Activated T-helper 2 cell treated with anti-CD3 and anti-CD28 coated beads, Interferon-gamma antibody, Interleukin-2, Interleukin-4, amounts not matched to agents 10 μg/mL and 5 μg/mL and 100 μg/mL, durations not matched to agents 14 hours and 24 hours and 36 hours (primary cell): ENCODE measurements at regions of chr2 and their contacts with region 1.

Region 1: DNA sequence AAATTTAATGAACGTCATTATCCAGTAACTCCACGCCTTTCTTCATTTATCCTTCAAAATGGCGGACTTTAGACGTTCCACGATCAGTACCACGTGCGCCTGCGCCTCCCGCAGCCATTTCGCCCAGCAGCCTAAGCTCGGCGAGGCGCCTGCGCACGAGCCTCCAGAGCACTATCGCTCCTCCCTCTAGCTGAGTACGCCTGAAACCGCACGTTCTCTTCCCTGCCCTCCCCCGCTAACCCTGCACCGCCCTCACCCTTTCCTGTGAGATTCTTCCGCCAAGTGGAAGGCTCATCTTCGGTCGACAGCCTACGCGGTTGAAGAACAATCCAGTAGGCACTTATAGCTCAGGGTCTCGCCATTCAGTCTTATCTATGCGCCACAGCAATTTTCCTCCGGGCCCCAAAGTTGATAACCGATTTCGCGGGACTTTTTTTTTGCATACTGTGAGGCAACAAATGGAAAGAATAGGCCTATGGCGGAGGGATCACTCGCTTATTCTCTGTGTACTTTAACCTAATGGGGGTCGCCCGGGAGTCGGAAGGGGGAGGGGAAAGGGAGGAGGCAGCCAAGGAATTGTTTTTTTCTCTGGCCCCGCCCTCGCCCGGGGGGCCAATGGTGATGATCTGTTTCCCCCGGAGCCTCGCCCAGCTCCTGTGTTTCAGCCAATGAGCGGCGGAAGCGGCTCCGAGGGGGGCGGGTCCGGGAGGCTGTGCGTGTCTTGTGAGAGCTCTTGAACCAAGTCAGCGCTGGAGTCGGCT is at the start of gene KDM3A:
- DNase-seq: peak; percentile 100
- H3K4me3 Mint-ChIP-seq: peak within 1 kb of the TSS; percentile 93
- H3K27ac Mint-ChIP-seq: peak within 1 kb of the TSS; percentile 98
- H3K4me1 Mint-ChIP-seq: peaks cover 38% of the 10 kb centered on the region
- H3K27me3 Mint-ChIP-seq: peaks cover 6% of the 10 kb centered on the region
- total RNA-seq, gene KDM3A: 74.5 and 78.2 TPM in 2 replicates

Region 2: GRCh38 chr2:85852937-85853498 is 587.8 kb before region 1 on chr2:
- intact Hi-C with region 1: loop called (anchors 5 kb)
- DNase-seq: peak; percentile 54
- H3K4me3 Mint-ChIP-seq: peak overlapping the region; percentile 75
- H3K27ac Mint-ChIP-seq: peak overlapping the region; percentile 99
- H3K4me1 Mint-ChIP-seq: peaks cover 62% of the 10 kb centered on the region
- H3K27me3 Mint-ChIP-seq: no peaks in the 10 kb centered on the region

Region 3: DNA sequence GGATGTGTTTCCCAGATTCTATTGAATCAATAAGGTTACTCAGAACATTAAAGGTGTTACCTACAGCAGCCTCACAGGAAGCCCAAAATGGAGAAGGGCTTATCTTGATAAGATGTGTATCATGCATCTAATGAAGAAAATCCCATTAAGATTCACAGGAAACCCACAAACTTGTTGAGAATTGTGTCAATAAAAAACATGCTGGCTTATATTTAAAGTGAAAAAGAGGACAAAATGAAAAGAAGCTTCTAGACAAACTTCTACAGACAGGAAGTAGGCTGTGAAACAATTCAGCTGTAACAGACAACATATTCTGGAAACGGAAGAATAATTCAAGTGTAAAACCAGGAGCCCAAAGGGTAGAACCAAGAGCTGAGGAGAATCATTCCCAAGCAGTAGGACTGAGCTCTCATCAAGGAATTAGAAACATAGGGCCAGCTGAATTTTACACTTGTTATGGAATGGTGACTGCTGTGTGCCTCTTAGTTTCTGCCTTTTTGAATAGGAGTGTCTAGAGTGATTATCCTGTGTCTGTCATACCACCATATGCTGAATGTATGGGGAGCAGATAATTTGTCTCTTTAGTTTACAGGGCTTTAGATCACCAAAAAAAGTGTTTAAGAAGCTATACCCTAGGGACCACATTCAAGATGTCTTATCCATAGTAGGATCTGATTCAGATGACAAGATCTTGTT is 255.1 kb before region 1 on chr2:
- intact Hi-C with region 1: loop called (anchors 2 kb)
- DNase-seq: no peak
- H3K4me3 Mint-ChIP-seq: peak overlapping the region; percentile 55
- H3K27ac Mint-ChIP-seq: peak overlapping the region; percentile 75
- H3K4me1 Mint-ChIP-seq: peaks cover 75% of the 10 kb centered on the region
- H3K27me3 Mint-ChIP-seq: no peaks in the 10 kb centered on the region

Region 4: GRCh38 chr2:86464652-86465051 is 23.8 kb after region 1 on chr2:
- intact Hi-C with region 1: loop called (anchors 2 kb)
- DNase-seq: no peak
- H3K4me3 Mint-ChIP-seq: peak overlapping the region; percentile 33
- H3K27ac Mint-ChIP-seq: peak overlapping the region; percentile 75
- H3K4me1 Mint-ChIP-seq: peaks cover 52% of the 10 kb centered on the region
- H3K27me3 Mint-ChIP-seq: no peaks in the 10 kb centered on the region

Region 5: GRCh38 chr2:86562922-86563649 is 122.3 kb after region 1 on chr2 and contains the start of gene CHMP3:
- intact Hi-C with region 1: loop called (anchors 2 kb)
- DNase-seq: peak; percentile 96
- H3K4me3 Mint-ChIP-seq: peak within 1 kb of the TSS; percentile 90
- H3K27ac Mint-ChIP-seq: peak within 1 kb of the TSS; percentile 98
- H3K4me1 Mint-ChIP-seq: peaks cover 37% of the 10 kb centered on the region
- H3K27me3 Mint-ChIP-seq: no peaks in the 10 kb centered on the region
- total RNA-seq, gene CHMP3: 31.4 and 33.6 TPM in 2 replicates

Region 6: GRCh38 chr2:86623651-86624541 is 183.1 kb after region 1 on chr2 and contains the start of gene RNF103:
- intact Hi-C with region 1: loop called (anchors 1 kb)
- DNase-seq: peak; percentile 91
- H3K4me3 Mint-ChIP-seq: peak within 1 kb of the TSS; percentile 93
- H3K27ac Mint-ChIP-seq: peak within 1 kb of the TSS; percentile 94
- H3K4me1 Mint-ChIP-seq: peaks cover 21% of the 10 kb centered on the region
- H3K27me3 Mint-ChIP-seq: peaks cover 17% of the 10 kb centered on the region
- total RNA-seq, gene RNF103: 12.4 and 12.7 TPM in 2 replicates